ENCODE measurements at regions of chr16 and their contacts with region 1.

Region 1: GRCh38 chr16:30557957-30558788 is at the start of gene ZNF764:
- DNase-seq: peak; percentile 83 to 98 (median 88)
- ATAC-seq: peak; percentile 99
- H3K4me3 ChIP-seq: peak within 1 kb of the TSS; percentile 66
- H3K27ac ChIP-seq: peak within 1 kb of the TSS; percentile 94
- H3K4me1 ChIP-seq: peaks cover 21 to 57% of the 10 kb centered on the region in 2 experiments; a peak in 4 of 5 replicates
- H3K27me3 ChIP-seq: no peaks in the 10 kb centered on the region
- CTCF ChIP-seq: no peak; a peak in 1 of 6 replicates
- EP300 ChIP-seq: peak; percentile 14; the same call in 1 of the 2 replicates
- POLR2A ChIP-seq: peak; percentile 75
- RAD21 ChIP-seq: 0 out of 4 replicates have a peak, but pooled peaks have one; percentile 0 to 4
- polyA plus RNA-seq, gene ZNF764: 0.69 to 0.81 TPM

Region 2: GRCh38 chr16:30499284-30499683 is 58.9 kb before region 1 on chr16:
- CTCF ChIA-PET with region 1: no interaction called
- POLR2A ChIA-PET with region 1: no interaction called
- in situ Hi-C with region 1: no loop called
- intact Hi-C with region 1: no loop called
- DNase-seq: peak in 3 of 4 experiments; percentile 35 to 48 (median 46)
- ATAC-seq: peak; percentile 71
- H3K4me3 ChIP-seq: peak overlapping the region; percentile 15; the same call in 1 of the 2 replicates
- H3K27ac ChIP-seq: peak overlapping the region; percentile 41; the same call in 2 of the 3 replicates
- H3K4me1 ChIP-seq: peaks cover 6 to 16% of the 10 kb centered on the region in 2 experiments; a peak in 3 of 5 replicates
- H3K27me3 ChIP-seq: no peaks in the 10 kb centered on the region
- CTCF ChIP-seq: no peak
- EP300 ChIP-seq: no peak
- POLR2A ChIP-seq: no peak
- RAD21 ChIP-seq: no peak

Region 3: GRCh38 chr16:30534368-30535105 is 23.6 kb before region 1 on chr16 and contains the start of gene ZNF747:
- CTCF ChIA-PET with region 1: no interaction called
- POLR2A ChIA-PET with region 1: interaction called, 31 read pairs
- in situ Hi-C with region 1: no loop called
- intact Hi-C with region 1: no loop called
- DNase-seq: peak; percentile 83 to 94 (median 88)
- ATAC-seq: peak; percentile 88
- H3K4me3 ChIP-seq: peak within 1 kb of the TSS; percentile 49
- H3K27ac ChIP-seq: peak within 1 kb of the TSS; percentile 96
- H3K4me1 ChIP-seq: peaks cover 9 to 50% of the 10 kb centered on the region in 2 experiments; a peak in 4 of 5 replicates
- H3K27me3 ChIP-seq: no peaks in the 10 kb centered on the region
- CTCF ChIP-seq: peak in 1 of 3 experiments; percentile 6; a peak in 2 of 6 replicates
- EP300 ChIP-seq: no peak
- POLR2A ChIP-seq: no peak
- RAD21 ChIP-seq: 0 out of 4 replicates have a peak, but pooled peaks of 1 of the 2 experiments have one; percentile 5
- polyA plus RNA-seq, gene ZNF747: 0.14 to 0.27 TPM

Region 4: GRCh38 chr16:30541502-30542329 is 16.5 kb before region 1 on chr16:
- CTCF ChIA-PET with region 1: no interaction called
- POLR2A ChIA-PET with region 1: interaction called, 31 read pairs
- in situ Hi-C with region 1: no loop called
- intact Hi-C with region 1: no loop called
- DNase-seq: peak in 2 of 4 experiments; percentile 34 to 73
- ATAC-seq: peak; percentile 66
- H3K4me3 ChIP-seq: no peak overlapping the region
- H3K27ac ChIP-seq: peak overlapping the region; percentile 30; the same call in 2 of the 3 replicates
- H3K4me1 ChIP-seq: peaks cover 25 to 30% of the 10 kb centered on the region in 2 experiments; a peak in 4 of 5 replicates
- H3K27me3 ChIP-seq: no peaks in the 10 kb centered on the region
- CTCF ChIP-seq: no peak
- EP300 ChIP-seq: peak; percentile 51; the same call in 1 of the 2 replicates
- POLR2A ChIP-seq: no peak
- RAD21 ChIP-seq: no peak

Region 5: DNA sequence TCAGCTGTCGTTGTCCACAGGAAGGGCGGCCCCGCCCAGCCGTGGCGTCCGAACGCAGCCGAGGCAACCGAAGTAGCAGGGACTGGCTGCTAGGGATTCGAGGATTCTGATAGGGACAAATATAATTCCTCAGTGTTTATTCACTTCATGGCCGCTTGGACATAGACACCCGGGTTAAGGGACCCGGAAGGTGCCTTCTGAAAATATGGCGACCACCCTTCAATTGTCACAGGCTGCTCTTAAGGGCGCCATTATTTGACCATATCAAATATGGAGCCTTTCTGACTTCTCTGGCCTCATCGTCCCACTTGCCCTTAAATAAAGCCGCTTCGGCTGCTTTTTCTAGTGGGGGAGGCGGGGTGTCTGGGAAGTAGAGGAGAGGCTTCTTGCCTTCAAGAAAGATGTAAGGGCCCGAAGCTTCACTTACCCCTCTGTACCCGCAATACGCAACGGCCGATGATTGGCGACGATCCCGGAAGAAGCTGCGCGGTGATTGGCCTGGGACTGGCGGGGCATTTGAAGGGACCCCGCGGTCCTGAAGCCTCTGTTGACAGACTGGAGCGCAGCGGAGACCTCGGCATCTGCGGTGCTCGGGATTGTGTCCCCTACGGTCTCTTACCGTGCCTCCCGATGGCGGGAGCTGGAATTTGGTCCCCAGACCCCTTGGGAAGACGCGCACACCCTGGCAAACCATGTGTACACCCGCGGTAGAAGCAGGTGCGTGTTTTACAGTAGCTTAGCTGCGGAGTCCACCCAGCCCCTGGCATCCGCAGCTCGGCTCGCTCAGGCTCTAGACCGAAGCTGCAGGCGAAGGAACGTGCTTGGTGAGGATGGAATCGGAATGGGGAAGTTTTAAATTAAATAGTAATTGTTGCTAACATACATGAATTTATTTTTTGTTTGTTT is 13.8 kb after region 1 on chr16 and contains the start of gene ZNF688:
- CTCF ChIA-PET with region 1: no interaction called
- POLR2A ChIA-PET with region 1: interaction called, 27 read pairs
- in situ Hi-C with region 1: no loop called
- intact Hi-C with region 1: no loop called
- DNase-seq: peak; percentile 92 to 97 (median 94)
- ATAC-seq: peak; percentile 88
- H3K4me3 ChIP-seq: peak within 1 kb of the TSS; percentile 65
- H3K27ac ChIP-seq: peak within 1 kb of the TSS; percentile 83
- H3K4me1 ChIP-seq: peaks cover 17 to 36% of the 10 kb centered on the region in 2 experiments
- H3K27me3 ChIP-seq: no peaks in the 10 kb centered on the region
- CTCF ChIP-seq: 0 out of 6 replicates have a peak, but pooled peaks of 1 of the 3 experiments have one; percentile 4
- EP300 ChIP-seq: no peak
- POLR2A ChIP-seq: peak; percentile 80
- RAD21 ChIP-seq: peak in 1 of 2 experiments; percentile 9; a peak in 1 of 4 replicates
- polyA plus RNA-seq, gene ZNF688: 0.48 TPM

Region 6: DNA sequence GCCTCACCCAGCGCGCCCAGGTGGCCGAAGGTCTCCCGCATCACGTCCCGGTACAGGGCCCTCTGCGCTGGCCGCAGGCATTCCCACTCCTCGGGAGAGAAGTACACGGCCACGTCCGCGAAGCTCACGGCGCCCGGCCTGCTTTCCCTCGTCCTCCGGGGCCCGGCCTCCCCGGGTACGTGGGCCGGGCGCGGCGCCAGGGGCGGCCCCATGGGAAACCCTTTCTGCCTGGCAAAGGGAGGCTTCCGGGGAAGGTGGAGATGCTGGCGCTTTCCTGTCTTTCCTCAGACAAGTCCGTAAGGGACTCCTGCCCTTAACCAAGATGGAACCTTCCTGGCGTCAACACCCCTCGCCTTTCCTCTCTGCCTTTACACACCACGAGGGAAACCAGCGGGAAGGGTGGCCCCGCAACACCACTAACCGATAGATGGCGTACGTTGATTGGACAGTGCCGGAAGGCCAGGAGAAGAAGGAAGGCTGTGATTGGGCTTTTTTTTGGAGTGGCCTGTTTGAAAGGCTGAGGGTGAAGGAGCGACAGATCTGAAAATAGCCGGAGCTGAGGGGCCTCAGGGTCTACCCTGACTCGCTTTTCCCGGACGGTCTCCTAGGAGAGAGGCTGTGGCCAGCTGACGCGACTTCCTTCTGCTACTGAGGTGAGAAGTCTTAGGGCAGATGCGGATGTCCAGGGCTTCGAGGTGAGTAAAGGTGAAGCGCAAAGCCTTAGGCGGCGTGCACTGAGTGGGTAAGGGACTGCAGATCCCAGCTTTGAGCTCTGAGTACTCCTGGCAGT is 27.4 kb after region 1 on chr16 and contains the start of gene ZNF785:
- CTCF ChIA-PET with region 1: no interaction called
- POLR2A ChIA-PET with region 1: interaction called, 8 read pairs
- in situ Hi-C with region 1: no loop called
- intact Hi-C with region 1: loop called (anchors 1 kb)
- DNase-seq: peak; percentile 98 to 99 (median 99)
- ATAC-seq: peak; percentile 90
- H3K4me3 ChIP-seq: peak within 1 kb of the TSS; percentile 61
- H3K27ac ChIP-seq: peak within 1 kb of the TSS; percentile 99
- H3K4me1 ChIP-seq: peaks cover 13 to 43% of the 10 kb centered on the region in 2 experiments; a peak in 4 of 5 replicates
- H3K27me3 ChIP-seq: no peaks in the 10 kb centered on the region
- CTCF ChIP-seq: peak; percentile 20 to 44 (median 29); a peak in 3 of 6 replicates
- EP300 ChIP-seq: peak; percentile 32
- POLR2A ChIP-seq: peak; percentile 79
- RAD21 ChIP-seq: peak; percentile 13 to 31; a peak in 2 of 4 replicates
- polyA plus RNA-seq, gene ZNF785: 0.64 to 0.70 TPM